Heart left ventricle (tissue), 16 donors: ENCODE measurements at regions of chr1 and their contacts with region 1.

Region 1: DNA sequence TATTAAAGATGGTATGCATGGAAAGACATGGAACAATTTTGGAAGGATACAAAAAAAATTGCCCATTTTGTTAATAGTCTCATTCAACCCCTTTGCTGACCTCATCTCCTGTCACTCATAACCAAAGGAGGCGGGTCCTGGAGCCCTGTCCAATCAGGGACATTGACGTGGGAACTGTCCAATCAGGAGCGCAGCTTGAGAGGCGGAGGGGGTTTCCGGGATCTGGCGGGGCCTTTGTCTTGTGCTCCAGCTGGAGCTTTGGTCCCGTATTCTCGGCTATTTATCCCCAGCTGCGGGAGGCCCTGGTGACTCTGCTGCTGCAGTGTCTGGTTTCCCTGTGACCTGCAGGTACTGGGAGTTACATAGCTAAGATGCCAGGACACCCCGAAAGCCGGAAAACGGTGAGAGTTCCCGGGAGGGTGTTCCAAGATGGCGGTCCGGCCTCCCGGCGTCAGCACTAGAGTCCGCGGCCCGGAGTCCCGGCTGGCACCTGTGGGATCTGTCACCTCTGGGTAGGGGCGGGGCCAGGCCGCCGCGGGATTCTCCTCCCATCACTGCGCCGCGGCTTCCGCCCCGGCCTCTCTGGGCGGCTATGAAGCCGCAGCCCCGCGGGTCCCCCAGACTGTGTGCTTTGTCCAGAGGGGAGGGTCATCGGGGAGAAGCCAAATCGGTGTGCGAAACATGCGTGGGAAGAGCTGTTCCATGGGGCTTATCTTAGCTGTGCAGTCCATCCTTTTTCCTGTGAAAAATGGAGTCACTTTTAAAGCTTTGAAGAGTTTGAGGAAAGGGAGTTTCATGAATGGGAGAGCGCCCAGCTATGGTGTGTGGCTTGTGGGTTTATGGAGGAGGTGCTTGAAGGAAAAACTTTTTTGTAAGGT is at the start of gene ZNF678:
- DNase-seq: peak; percentile 92 to 95 (median 93)
- ATAC-seq: peak; percentile 96 to 98 (median 98)
- H3K4me3 ChIP-seq: peak within 1 kb of the TSS; percentile 40 to 90 (median 77)
- H3K27ac ChIP-seq: peak within 1 kb of the TSS; percentile 30 to 93 (median 86)
- H3K4me1 ChIP-seq: peaks cover 0 to 28% (median 8%) of the 10 kb centered on the region in 12 donors
- H3K27me3 ChIP-seq: peaks cover 6 to 33% (median 27%) of the 10 kb centered on the region in 9 donors
- CTCF ChIP-seq: no peak
- POLR2A ChIP-seq: peak in 1 of 2 donors; percentile 36
- total RNA-seq, gene ZNF678: 2.2 to 6.0 (median 3.3) TPM

Region 2: DNA sequence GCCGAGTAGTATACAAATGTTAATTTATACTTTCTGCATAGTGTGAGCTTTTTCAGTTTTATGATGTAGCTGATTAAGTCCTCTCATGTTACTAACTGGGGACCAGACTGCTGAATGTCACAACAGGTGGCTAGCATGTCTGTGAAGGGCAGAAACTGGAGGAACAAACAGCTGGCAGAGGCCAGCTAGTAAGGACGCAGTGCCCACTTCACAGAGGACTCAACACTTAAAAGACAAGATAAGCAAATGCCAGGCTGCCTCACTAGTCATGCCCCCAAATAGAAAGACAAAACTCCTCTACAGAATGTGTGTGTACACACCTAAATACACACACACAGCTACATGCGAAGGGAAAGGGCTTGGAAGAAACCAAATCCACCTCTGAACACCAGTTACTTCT is 74.0 kb before region 1 on chr1:
- intact Hi-C with region 1: no loop called
- DNase-seq: peak in 2 of 5 donors; percentile 44 to 59
- ATAC-seq: peak; percentile 87 to 95 (median 92)
- H3K4me3 ChIP-seq: no peak overlapping the region
- H3K27ac ChIP-seq: peak overlapping the region in 1 of 12 donors; percentile 37
- H3K4me1 ChIP-seq: peaks cover 0 to 16% (median 1%) of the 10 kb centered on the region in 12 donors
- H3K27me3 ChIP-seq: no peaks in the 10 kb centered on the region
- CTCF ChIP-seq: no peak
- POLR2A ChIP-seq: no peak

Region 3: GRCh38 chr1:227604446-227604845 is 40.9 kb after region 1 on chr1:
- intact Hi-C with region 1: loop called in 1 of 10 experiments (anchors 1 kb)
- DNase-seq: no peak
- ATAC-seq: no peak
- H3K4me3 ChIP-seq: no peak overlapping the region
- H3K27ac ChIP-seq: no peak overlapping the region
- H3K4me1 ChIP-seq: peaks cover 0 to 17% (median 4%) of the 10 kb centered on the region in 12 donors
- H3K27me3 ChIP-seq: no peaks in the 10 kb centered on the region
- CTCF ChIP-seq: no peak
- POLR2A ChIP-seq: no peak

Region 4: GRCh38 chr1:227728059-227728891 is 164.7 kb after region 1 on chr1:
- intact Hi-C with region 1: loop called in 7 of 10 experiments (anchors 5 to 10 kb)
- DNase-seq: peak; percentile 79 to 89 (median 85)
- ATAC-seq: peak; percentile 35 to 63 (median 62)
- H3K4me3 ChIP-seq: peak overlapping the region; percentile 24 to 86 (median 64)
- H3K27ac ChIP-seq: peak overlapping the region; percentile 33 to 89 (median 80)
- H3K4me1 ChIP-seq: peaks cover 0 to 37% (median 24%) of the 10 kb centered on the region in 12 donors
- H3K27me3 ChIP-seq: no peaks in the 10 kb centered on the region
- CTCF ChIP-seq: no peak
- POLR2A ChIP-seq: no peak

Region 5: DNA sequence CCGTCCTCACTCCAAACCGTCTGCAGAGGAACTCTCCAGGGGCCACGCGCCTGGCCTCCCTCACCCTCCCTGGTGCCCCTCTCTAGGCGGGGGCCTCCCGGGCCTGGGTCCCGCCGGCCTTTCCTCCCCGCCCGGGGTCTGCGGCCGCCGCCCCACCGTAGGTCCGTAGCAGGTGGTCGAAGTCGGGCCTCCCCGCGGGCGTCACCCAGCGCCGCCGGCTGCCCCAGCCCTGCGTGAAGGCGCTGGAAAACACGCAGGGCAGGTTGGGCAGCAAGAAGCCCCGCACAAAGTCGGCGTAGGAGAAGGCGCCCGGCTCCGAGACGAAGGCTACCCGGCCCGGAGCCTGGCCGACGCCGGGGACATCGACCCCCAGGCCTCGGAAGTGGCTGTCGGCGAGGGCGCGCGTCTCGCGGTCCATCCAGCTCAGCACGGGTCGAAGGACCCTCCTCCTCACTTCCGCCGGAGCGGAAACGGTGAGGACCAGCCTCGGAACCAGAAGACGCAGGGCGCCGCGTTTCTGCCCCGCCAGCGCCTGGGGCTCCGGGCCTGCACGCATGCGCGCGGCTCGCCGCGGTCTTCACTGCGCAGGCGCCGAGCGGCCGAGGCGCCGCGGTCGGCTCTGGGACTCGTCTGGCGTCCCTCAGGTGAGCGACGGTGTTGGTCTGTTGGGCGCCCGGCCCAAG is 171.4 kb after region 1 on chr1 and contains the starts of genes JMJD4 and SNAP47:
- intact Hi-C with region 1: loop called in 3 of 10 experiments (anchors 5 to 10 kb)
- DNase-seq: peak; percentile 92 to 96 (median 94)
- ATAC-seq: peak; percentile 72 to 94 (median 90)
- H3K4me3 ChIP-seq: peak within 1 kb of the TSS; percentile 73 to 99 (median 93)
- H3K27ac ChIP-seq: peak within 1 kb of the TSS; percentile 66 to 95 (median 88)
- H3K4me1 ChIP-seq: peaks cover 0 to 45% (median 27%) of the 10 kb centered on the region in 12 donors
- H3K27me3 ChIP-seq: no peaks in the 10 kb centered on the region
- CTCF ChIP-seq: no peak
- POLR2A ChIP-seq: peak in 1 of 2 donors; percentile 86
- total RNA-seq, gene JMJD4: 7.8 to 14.1 (median 11.5) TPM
- total RNA-seq, gene SNAP47: 24.7 to 106 (median 37.9) TPM

Region 6: DNA sequence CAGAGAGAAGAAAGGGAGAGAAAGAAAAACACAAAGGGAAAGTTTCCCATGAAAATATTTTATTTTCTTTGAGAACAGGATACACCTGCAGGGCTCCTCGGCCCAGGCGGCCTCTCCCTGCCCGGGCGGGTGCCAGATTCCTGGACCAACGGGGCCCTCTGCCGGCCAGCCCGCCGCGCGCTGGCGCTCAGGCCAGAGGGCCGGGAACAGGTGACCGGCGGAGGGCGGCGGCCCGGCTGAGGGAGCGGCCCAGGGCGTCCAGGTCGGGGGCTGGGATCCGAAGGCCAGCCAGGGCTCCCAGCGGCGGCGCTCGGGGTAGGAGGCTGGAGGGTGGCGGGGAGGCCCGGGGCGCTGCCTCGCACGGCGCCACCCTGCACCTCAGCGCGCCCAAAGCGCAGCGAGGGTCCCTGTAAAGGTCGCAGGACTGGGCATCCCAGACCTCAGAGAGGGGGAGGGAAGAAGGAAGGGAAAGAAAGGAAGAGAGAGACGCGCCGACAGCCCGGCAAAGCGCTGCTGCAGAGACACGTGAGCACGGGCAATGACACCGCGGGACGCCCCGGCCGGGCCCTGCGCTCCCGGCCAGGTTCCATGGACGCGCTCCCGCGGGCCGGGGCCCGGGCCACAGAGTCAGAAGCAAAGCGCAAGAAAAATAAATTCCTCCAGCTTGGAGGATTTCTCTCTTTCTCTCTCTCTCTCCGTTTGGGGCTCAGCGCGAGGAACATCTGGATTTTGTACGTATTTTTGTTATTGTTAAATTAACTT is 383.2 kb after region 1 on chr1:
- intact Hi-C with region 1: loop called in 2 of 10 experiments (anchors 5 to 10 kb)
- DNase-seq: peak; percentile 75 to 84 (median 78)
- ATAC-seq: peak; percentile 59 to 79 (median 72)
- H3K4me3 ChIP-seq: peak overlapping the region; percentile 26 to 73 (median 59)
- H3K27ac ChIP-seq: peak overlapping the region in 10 of 12 donors; percentile 34 to 95 (median 89)
- H3K4me1 ChIP-seq: peaks cover 0 to 57% (median 32%) of the 10 kb centered on the region in 12 donors
- H3K27me3 ChIP-seq: peaks cover 0 to 29% (median 0%) of the 10 kb centered on the region in 9 donors
- CTCF ChIP-seq: peak; percentile 62 to 90 (median 82)
- POLR2A ChIP-seq: no peak

Region 7: DNA sequence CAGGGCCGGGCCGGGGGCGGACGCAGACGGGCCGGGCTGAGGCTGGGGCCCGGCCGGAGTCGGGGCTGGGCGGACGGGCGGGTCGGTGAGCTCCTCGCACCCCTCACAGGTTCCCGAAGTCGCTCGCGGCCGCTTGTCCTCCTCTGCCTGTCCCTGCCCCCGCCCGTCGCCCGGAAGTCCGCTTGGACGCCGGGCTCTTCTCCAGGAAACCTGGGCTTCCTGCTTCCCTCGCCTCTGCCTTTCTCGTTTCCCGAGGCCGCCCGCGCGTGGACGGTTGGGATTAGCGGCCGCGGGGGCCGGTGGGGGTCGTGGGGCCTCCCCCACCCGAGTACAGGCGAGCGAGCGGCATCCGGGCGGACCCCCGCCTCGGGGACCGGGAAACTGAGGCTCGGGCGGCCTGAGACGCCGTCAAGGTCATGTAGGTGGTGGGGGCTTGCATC is 519.3 kb after region 1 on chr1:
- intact Hi-C with region 1: no loop called
- DNase-seq: peak; percentile 73 to 87 (median 78)
- ATAC-seq: peak in 3 of 4 donors; percentile 13 to 32 (median 20)
- H3K4me3 ChIP-seq: peak overlapping the region; percentile 67 to 100 (median 96)
- H3K27ac ChIP-seq: peak overlapping the region; percentile 95 to 100 (median 99)
- H3K4me1 ChIP-seq: peaks cover 33 to 65% (median 54%) of the 10 kb centered on the region in 12 donors
- H3K27me3 ChIP-seq: no peaks in the 10 kb centered on the region
- CTCF ChIP-seq: no peak
- POLR2A ChIP-seq: no peak